Posterior vena cava (tissue), 2 donors: ENCODE measurements at regions of chr9 and their contacts with region 1.

Region 1: GRCh38 chr9:75333624-75334023 is 245.3 kb downstream of the OSTF1 start:
- DNase-seq: no peak

Region 2: DNA sequence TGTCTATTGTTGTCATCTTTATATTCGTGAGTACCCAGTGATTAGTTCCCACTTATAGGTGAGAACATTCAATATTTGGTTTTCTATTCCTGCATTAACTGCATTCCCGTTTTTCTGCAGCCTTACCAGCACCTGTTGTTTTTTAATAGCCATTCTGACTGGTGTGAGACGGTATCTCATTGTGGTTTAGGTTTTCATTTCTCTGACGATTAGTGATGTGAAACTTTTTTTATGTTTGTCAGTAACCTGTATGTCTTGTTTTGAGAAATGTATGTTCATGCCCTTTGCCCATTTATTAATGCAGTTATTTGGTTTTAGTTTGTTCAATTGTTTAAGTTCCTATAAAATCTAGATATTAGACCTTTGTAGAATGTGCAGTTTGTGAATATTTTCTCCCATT is 1382.5 kb before region 1 on chr9:
- intact Hi-C with region 1: loop called in 1 of 2 experiments (anchors 10 kb)
- DNase-seq: no peak

Region 3: DNA sequence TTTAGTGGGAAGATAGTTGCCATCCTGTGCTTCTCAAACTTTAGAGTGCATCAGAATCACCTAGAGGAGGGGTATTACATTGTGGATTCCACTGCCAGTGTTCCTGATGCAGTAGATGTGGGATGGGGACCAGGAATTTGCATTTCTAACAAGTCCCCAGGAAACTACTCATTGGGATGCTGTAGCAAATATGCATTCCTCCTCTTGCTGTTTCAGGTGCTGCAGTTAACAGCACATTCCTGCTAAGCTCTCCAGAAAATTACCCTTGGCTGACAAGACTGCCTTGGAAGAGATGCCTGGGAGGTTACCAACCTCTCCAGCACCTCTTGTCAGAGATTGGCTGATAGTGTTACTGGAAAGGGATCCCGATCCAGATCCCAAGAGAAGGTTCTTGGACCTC is 25.2 kb after region 1 on chr9:
- intact Hi-C with region 1: no loop called
- DNase-seq: no peak